ENCODE measurements at regions of chr22 and their contacts with region 1.

Region 1: DNA sequence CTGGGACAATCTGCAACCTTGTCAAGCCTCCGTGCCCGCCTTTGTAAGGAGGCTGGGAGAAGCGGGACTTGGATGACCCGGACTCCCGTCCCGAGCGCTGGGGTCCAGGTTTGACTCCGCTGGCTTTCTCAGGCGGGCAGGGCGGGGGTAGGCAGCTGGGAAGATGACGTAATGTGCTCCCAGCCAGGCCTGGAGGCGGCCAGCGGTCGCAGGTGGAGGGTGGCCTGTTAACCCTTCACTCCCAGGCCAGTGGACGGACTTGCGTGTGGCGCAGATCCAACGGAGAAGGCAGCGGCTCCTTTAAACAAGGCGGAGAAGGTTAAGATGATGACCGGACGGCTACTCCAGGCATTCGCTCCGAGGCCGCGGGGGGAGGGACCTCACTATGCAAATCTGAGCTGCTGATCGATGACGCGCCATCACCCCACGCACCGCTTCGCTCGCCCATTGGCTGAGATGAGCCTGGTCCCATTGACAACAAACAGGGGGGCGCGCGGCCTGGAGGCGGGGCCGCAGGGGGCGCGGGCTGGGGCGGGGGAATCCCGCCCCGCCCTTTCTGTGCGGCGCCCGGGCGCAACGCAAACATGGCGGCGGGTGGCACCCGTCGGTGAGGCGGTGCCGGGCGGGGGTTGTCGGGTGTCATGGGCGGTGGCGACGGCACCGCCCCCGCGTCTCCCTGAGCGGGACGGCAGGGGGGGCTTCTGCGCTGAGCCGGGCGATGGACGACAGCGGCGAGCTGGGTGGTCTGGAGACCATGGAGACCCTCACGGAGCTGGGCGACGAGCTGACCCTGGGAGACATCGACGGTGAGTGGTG is at the start of gene SREBF2:
- DNase-seq: peak; percentile 96
- ATAC-seq: peak; percentile 85
- H3K4me3 Mint-ChIP-seq: peak within 1 kb of the TSS; percentile 98
- H3K27ac Mint-ChIP-seq: peak within 1 kb of the TSS; percentile 99
- H3K4me1 Mint-ChIP-seq: peaks cover 62% of the 10 kb centered on the region
- H3K27me3 Mint-ChIP-seq: no peaks in the 10 kb centered on the region
- CTCF ChIP-seq: no peak
- total RNA-seq, gene SREBF2: 253 and 307 TPM in 2 replicates

Region 2: GRCh38 chr22:41746567-41747400 is 86.0 kb before region 1 on chr22:
- CTCF ChIA-PET with region 1: no interaction called
- POLR2A ChIA-PET with region 1: interaction called, 13 read pairs
- intact Hi-C with region 1: no loop called
- DNase-seq: peak; percentile 18
- ATAC-seq: peak; percentile 96
- H3K4me3 Mint-ChIP-seq: peak overlapping the region; percentile 38
- H3K27ac Mint-ChIP-seq: peak overlapping the region; percentile 69
- H3K4me1 Mint-ChIP-seq: peaks cover 31% of the 10 kb centered on the region
- H3K27me3 Mint-ChIP-seq: no peaks in the 10 kb centered on the region
- CTCF ChIP-seq: no peak

Region 3: DNA sequence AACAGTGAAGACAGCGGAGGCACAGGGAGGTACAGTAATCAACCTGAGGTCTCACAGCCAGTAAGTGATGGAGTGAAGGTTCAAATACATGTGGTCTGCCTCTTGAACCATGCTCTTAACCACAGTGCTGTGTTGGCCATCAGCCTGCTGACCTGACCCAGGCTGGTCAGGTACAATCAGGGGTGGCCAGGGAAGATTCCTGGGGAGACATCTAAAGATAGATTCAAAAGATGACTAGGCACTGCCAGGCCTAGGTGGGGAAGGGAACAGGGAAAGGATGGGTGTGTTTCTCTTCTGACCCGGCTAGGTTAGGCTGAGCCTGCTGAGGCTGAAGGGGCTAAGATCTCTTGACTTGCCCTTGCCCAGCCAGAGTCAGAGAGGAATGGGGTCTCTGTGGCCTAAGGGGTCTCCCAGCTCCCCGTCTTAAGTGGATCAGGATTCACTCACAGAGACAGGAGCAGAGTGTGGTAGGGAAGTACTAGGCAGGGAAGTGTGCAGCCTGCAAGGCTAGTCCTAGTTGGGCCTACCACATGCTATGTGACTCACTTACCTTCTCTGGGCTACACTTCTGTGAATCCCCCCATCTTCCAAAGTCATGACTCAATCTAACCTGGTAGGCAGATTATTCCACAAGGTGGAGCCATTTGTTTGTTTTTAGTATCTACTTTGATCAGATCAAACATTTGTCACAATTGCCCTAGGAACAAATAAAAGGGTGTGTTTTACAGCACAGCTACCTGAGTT is 10.3 kb before region 1 on chr22:
- CTCF ChIA-PET with region 1: interaction called, 4 read pairs
- POLR2A ChIA-PET with region 1: interaction called, 3 read pairs
- intact Hi-C with region 1: loop called (anchors 1 kb)
- DNase-seq: no peak
- ATAC-seq: peak; percentile 90
- H3K4me3 Mint-ChIP-seq: no peak overlapping the region
- H3K27ac Mint-ChIP-seq: peak overlapping the region; percentile 26
- H3K4me1 Mint-ChIP-seq: peaks cover 5% of the 10 kb centered on the region
- H3K27me3 Mint-ChIP-seq: no peaks in the 10 kb centered on the region
- CTCF ChIP-seq: no peak

Region 4: DNA sequence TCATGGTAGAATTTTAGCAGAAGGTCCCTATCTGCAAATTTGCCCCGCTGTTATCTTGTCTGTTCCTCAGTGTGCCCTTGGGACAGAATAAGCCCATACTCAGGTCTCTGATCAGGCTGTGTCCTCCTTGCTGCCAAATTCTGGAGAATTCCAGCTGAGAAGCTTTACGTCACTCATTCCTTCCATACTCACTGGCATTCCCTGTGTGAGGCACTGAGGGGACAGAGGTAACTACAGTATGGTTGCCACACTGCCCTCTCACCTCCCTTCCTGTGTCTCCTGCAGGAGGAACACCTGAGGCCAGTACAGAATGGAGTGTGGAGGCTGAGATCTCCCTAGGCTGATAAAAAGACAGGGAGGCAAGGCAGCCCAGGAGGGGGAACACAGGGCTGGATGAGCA is 50.6 kb after region 1 on chr22:
- CTCF ChIA-PET with region 1: interaction called, 3 read pairs
- POLR2A ChIA-PET with region 1: interaction called, 19 read pairs
- intact Hi-C with region 1: loop called (anchors 2 kb)
- DNase-seq: no peak
- ATAC-seq: no peak
- H3K4me3 Mint-ChIP-seq: no peak overlapping the region
- H3K27ac Mint-ChIP-seq: peak overlapping the region; percentile 63
- H3K4me1 Mint-ChIP-seq: peaks cover 63% of the 10 kb centered on the region
- H3K27me3 Mint-ChIP-seq: no peaks in the 10 kb centered on the region
- CTCF ChIP-seq: no peak

Region 5: GRCh38 chr22:41925655-41926460 is 93.1 kb after region 1 on chr22:
- CTCF ChIA-PET with region 1: interaction called, 7 read pairs
- POLR2A ChIA-PET with region 1: interaction called, 141 read pairs
- intact Hi-C with region 1: no loop called
- DNase-seq: peak; percentile 90
- ATAC-seq: peak; percentile 45
- H3K4me3 Mint-ChIP-seq: peak overlapping the region; percentile 92
- H3K27ac Mint-ChIP-seq: peak overlapping the region; percentile 94
- H3K4me1 Mint-ChIP-seq: peaks cover 83% of the 10 kb centered on the region
- H3K27me3 Mint-ChIP-seq: no peaks in the 10 kb centered on the region
- CTCF ChIP-seq: peak; percentile 26

Region 6: DNA sequence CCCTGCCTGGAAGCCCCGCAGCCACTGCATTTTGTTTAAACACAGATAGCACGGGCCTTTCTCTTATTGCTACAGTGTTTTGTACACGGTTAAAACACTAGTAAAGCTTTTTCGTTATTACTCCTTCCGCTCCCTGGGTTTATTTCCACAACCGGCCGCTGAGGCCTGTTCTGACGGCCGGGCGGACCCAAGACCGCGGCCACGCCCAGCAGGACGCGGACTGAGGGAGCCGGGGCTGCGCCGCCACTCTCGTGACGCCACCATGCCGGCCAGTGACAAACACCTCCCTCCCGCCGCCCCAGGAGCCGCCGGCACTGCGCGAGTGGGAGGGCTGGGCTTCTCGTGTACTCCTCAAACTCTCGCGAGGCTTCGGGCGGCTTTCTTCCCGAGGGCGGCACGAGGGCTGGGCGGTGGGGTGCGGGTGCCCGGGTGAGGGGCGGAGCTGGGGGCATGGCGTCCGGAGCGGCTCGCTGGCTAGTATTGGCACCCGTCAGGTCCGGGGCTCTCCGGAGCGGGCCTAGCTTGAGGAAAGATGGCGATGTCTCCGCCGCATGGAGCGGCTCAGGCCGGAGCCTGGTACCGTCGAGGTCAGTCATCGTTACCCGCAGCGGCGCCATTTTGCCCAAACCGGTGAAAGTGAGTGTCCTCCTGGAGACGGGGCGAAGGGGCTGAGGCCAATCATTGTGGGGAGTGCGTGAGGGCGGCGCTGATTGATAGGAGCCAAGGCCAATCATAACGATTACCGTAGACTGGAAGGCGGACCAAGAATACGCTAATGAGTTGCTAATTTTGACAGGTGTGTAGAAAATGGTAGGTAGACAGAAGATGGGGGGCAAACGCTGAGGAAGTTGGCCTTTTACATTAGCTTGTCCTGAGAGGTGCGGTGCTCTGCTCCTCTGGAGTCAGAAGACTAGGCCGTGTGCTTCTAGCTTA is 246.8 kb after region 1 on chr22 and contains the start of gene SMDT1:
- CTCF ChIA-PET with region 1: no interaction called
- POLR2A ChIA-PET with region 1: interaction called, 11 read pairs
- intact Hi-C with region 1: loop called (anchors 2 kb)
- DNase-seq: peak; percentile 97
- ATAC-seq: peak; percentile 89
- H3K4me3 Mint-ChIP-seq: peak within 1 kb of the TSS; percentile 95
- H3K27ac Mint-ChIP-seq: peak within 1 kb of the TSS; percentile 97
- H3K4me1 Mint-ChIP-seq: peaks cover 38% of the 10 kb centered on the region
- H3K27me3 Mint-ChIP-seq: no peaks in the 10 kb centered on the region
- CTCF ChIP-seq: no peak
- total RNA-seq, gene SMDT1: 165 and 167 TPM in 2 replicates

Measured in activated B cell treated with CpG ODN at 0.5 μM for 24 hours (primary cell).